ENCODE measurements at regions of chr11 and their contacts with region 1.

Region 1: GRCh38 chr11:62542750-62543567 is 3.6 kb downstream of the AHNAK start:
- DNase-seq: peak; percentile 92
- ATAC-seq: peak; percentile 38

Region 2: DNA sequence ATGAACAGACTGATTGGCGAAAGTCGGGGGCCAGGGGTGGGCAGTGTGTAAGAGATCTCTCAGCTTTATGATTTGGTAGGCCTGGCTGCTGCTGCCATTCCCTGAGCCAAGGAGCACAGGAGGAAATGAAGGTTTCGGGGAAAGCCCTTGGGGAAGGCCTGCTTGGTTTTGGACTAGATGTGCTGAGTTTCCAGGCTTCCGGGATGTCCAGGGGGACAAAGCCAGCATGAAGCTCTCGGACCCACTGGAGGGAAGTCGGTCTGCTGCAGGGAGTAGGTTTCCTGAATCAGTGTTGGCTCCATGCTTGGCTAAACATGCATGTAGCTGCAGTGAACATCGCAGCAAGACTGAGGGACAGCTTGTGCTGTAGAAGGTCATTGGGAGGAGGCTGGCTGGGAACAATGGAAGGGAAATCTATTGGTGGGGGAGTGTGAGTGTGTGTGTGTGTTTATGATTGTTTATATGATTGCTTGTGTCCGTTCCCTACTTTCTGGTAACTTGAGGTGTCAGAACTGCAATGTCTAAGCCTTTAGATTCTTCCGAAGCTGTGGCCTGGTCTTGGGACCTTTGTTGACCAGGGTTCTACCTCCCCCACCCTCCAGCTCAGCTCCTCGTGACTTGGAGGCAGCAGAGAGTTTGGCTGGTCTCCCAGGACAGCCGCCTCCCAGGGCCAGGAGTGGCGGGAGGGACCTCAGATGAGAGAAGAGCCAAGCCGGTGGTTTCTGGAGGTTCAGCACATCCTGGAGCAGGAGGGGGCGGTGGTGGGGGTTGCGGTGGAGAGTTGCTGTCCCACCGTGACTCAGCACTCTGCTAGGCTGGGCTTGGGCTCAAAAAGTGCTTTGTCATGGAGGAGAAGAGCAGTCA is 571.5 kb before region 1 on chr11:
- intact Hi-C with region 1: no loop called
- DNase-seq: peak; percentile 96
- ATAC-seq: peak; percentile 70

Region 3: GRCh38 chr11:62394825-62395538 is 148.0 kb before region 1 on chr11:
- intact Hi-C with region 1: loop called (anchors 5 kb)
- DNase-seq: peak; percentile 87
- ATAC-seq: peak; percentile 74

Region 4: GRCh38 chr11:62508268-62509058 is 34.5 kb before region 1 on chr11:
- intact Hi-C with region 1: loop called (anchors 2 kb)
- DNase-seq: peak; percentile 90
- ATAC-seq: peak; percentile 89

Region 5: DNA sequence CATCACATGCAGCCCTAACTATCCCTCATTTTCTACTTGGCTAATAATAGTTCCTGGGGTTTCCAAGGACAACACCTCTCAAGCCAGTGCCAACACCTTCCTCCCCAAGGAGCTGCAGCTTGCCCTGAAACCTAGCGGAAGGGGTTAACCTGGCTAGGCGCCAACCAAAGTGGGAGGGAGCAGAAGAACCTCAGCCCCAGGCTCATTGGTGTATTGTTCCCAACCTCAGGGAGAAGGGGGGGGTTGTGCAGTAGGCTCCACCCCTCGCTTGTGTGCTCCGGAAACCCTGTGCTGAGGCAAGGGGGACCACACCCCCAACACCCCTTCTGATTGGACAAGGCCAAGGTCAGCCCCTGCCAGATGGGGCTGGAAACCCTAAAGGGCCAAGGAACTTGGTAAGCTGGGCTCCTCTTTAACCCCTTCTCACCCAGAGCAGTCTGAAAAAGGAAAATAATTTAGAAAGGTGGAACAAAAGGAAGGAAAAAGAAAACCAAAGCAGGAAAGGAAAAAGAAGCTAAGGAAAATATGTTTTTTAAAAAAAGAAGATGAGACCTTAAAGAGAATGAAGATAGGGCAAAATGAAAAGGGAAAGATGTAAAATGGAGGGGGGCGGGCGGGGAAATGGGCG is 56.2 kb after region 1 on chr11:
- intact Hi-C with region 1: loop called (anchors 2 kb)
- DNase-seq: peak; percentile 96
- ATAC-seq: peak; percentile 73

Region 6: GRCh38 chr11:62726915-62727763 is 184.2 kb after region 1 on chr11 and contains the start of gene HNRNPUL2:
- intact Hi-C with region 1: no loop called
- DNase-seq: peak; percentile 99
- ATAC-seq: peak; percentile 94
- total RNA-seq, gene HNRNPUL2: 33.8 TPM

Region 7: DNA sequence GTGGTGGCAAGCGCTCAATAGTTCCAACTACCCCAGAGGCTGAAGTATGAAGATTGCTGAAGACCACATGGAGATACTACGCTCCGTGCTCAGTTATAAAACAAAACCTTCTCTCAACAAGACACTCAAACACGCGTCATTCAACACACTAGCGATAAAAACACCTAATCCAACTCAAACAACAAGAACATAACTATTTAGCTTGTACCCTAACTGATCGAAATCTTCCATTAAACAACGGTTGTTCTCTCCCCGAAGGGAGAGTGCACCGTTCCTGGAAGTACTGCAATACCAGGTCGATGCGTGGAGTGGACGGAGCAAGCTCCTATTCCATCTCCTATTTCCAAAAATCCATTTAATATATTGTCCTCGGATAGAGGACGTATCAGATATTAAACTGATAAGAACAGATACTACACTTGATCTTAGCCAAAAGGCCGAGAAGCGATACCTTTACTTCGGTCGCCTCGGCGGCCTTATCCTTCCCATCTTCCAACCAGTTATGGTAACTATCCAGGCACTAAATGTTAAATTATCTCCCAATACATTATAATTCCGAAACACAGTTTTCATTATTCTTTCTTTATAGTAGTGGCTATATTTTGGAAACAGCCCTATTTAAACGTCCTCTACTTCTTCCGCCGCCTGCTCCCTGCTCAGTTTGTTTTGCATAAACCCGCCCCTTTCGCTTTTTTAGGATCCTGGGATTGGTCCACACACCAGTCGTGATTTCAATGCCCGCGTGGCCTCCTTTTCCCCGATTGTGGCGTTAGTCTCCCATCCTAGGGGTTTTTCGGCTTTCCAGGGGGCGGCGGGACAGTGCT is 298.6 kb after region 1 on chr11:
- intact Hi-C with region 1: loop called (anchors 5 kb)
- DNase-seq: peak; percentile 90
- ATAC-seq: peak; percentile 79